Head of caudate nucleus (tissue), 42 donors: ENCODE measurements at regions of chr20 and their contacts with region 1.

Region 1: GRCh38 chr20:4689220-4689619 is 32.5 kb upstream of the PRND start:
- DNase-seq: peak in 2 of 42 donors; percentile 37 to 39

Region 2: GRCh38 chr20:4613718-4614620 is 75.3 kb before region 1 on chr20:
- intact Hi-C with region 1: loop called (anchors 2 kb)
- DNase-seq: peak; percentile 52 to 93 (median 82)